ENCODE measurements at regions of chr2 and their contacts with region 1.

Region 1: DNA sequence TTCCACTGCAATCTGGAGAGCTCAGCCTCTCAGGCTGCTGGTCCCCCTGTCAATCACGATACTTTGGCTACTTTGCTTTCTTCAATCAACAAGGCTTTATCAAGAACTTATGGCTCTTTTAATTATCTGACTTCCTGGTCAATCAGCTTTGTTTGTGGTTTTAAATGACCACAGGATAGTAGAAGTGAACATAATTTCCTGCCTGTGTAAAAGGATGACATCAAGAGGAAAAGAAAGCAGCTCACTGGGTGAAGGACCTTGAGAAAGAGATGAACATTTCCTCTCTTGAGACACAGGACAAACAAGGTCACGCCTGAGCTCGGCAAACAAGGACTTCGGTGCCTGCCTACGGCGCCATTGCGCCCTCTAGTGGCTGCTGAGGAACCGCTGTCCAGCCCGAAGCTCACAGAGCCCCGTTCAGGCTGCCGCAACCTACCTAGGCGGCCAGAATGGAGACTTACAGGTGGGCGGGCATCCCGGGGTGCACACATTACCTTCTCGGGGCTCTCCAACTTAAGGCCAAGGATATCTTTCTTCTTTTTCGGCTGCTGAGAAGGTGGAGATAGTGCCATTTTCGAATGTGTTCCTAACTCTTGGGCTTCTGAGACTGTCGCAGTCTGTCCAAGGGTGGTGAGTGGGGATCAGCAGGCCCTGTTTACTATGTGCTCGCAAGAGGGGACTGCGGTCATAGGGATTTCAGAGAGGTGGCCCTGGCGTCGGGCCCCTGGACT is 54.0 kb downstream of the IL1RL2 start:
- DNase-seq: peak; percentile 77 to 83 (median 77)
- H3K4me3 ChIP-seq: no peak overlapping the region
- H3K4me3 Mint-ChIP-seq: peak overlapping the region in 4 of 8 donors; percentile 10 to 57 (median 38)
- H3K27ac ChIP-seq: no peak overlapping the region
- H3K27ac Mint-ChIP-seq: peak overlapping the region in 6 of 7 donors; percentile 3 to 78 (median 62)
- H3K4me1 ChIP-seq: peaks cover 12% of the 10 kb centered on the region
- H3K4me1 Mint-ChIP-seq: peaks cover 6 to 19% (median 11%) of the 10 kb centered on the region in 4 donors
- H3K27me3 ChIP-seq: no peaks in the 10 kb centered on the region
- H3K27me3 Mint-ChIP-seq: no peaks in the 10 kb centered on the region

Region 2: DNA sequence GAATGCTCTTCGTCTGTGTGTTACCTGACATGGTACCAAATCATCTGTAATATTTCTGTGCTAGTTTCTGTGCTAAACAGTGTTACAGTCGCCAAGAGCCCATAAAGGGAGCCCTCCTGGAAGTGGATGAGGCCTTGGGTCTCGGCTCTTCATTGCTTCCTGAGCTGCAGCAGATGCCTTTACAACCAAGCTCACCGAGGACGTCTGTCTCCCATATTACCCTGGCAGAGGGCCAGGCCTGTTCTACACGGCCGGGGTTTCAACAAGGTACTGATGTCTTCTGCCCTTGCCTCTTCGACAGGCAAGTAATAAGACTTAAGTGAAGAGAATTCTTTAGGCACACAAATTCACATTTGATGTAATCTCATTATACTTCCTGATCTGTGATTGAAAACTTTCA is 1221.9 kb before region 1 on chr2:
- CTCF ChIA-PET with region 1: no interaction called
- POLR2A ChIA-PET with region 1: no interaction called
- intact Hi-C with region 1: no loop called
- DNase-seq: no peak
- H3K4me3 ChIP-seq: no peak overlapping the region
- H3K4me3 Mint-ChIP-seq: no peak overlapping the region
- H3K27ac ChIP-seq: no peak overlapping the region
- H3K27ac Mint-ChIP-seq: peak overlapping the region in 2 of 7 donors; percentile 25 to 48
- H3K4me1 ChIP-seq: no peaks in the 10 kb centered on the region
- H3K4me1 Mint-ChIP-seq: peaks cover 0 to 1% (median 0%) of the 10 kb centered on the region in 4 donors
- H3K27me3 ChIP-seq: no peaks in the 10 kb centered on the region
- H3K27me3 Mint-ChIP-seq: no peaks in the 10 kb centered on the region

Region 3: GRCh38 chr2:101551336-101551888 is 689.4 kb before region 1 on chr2:
- CTCF ChIA-PET with region 1: no interaction called
- POLR2A ChIA-PET with region 1: no interaction called
- intact Hi-C with region 1: no loop called
- DNase-seq: no peak
- H3K4me3 ChIP-seq: no peak overlapping the region
- H3K4me3 Mint-ChIP-seq: peak overlapping the region in 2 of 8 donors; percentile 29 to 39
- H3K27ac ChIP-seq: no peak overlapping the region
- H3K27ac Mint-ChIP-seq: no peak overlapping the region
- H3K4me1 ChIP-seq: peaks cover 10% of the 10 kb centered on the region
- H3K4me1 Mint-ChIP-seq: peaks cover 12 to 19% (median 15%) of the 10 kb centered on the region in 4 donors
- H3K27me3 ChIP-seq: no peaks in the 10 kb centered on the region
- H3K27me3 Mint-ChIP-seq: no peaks in the 10 kb centered on the region

Region 4: DNA sequence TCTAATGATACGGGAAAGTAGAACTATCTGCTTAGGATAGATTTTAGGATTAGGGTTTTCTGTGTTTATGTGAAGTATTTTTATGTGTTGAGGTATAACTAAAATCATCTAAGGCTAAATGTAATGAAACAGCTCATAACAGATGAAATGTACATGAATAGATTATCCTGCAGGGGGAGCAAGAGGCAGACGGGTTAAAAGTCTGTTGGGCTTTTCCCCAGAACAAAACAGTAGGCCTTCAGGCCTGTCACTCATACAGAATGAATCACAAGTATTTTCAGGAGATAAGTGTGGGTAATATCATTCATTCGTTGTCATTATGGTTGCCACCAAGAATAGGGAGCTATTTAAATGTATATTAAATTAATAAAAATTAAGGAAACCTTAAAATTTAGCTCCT is 356.9 kb before region 1 on chr2:
- CTCF ChIA-PET with region 1: interaction called, 22 read pairs
- POLR2A ChIA-PET with region 1: no interaction called
- intact Hi-C with region 1: loop called (anchors 2 kb)
- DNase-seq: peak in 4 of 5 donors; percentile 25 to 37 (median 32)
- H3K4me3 ChIP-seq: no peak overlapping the region
- H3K4me3 Mint-ChIP-seq: no peak overlapping the region
- H3K27ac ChIP-seq: no peak overlapping the region
- H3K27ac Mint-ChIP-seq: peak overlapping the region in 3 of 7 donors; percentile 1 to 34 (median 22)
- H3K4me1 ChIP-seq: no peaks in the 10 kb centered on the region
- H3K4me1 Mint-ChIP-seq: peaks cover 0 to 3% (median 0%) of the 10 kb centered on the region in 4 donors
- H3K27me3 ChIP-seq: no peaks in the 10 kb centered on the region
- H3K27me3 Mint-ChIP-seq: no peaks in the 10 kb centered on the region

Region 5: DNA sequence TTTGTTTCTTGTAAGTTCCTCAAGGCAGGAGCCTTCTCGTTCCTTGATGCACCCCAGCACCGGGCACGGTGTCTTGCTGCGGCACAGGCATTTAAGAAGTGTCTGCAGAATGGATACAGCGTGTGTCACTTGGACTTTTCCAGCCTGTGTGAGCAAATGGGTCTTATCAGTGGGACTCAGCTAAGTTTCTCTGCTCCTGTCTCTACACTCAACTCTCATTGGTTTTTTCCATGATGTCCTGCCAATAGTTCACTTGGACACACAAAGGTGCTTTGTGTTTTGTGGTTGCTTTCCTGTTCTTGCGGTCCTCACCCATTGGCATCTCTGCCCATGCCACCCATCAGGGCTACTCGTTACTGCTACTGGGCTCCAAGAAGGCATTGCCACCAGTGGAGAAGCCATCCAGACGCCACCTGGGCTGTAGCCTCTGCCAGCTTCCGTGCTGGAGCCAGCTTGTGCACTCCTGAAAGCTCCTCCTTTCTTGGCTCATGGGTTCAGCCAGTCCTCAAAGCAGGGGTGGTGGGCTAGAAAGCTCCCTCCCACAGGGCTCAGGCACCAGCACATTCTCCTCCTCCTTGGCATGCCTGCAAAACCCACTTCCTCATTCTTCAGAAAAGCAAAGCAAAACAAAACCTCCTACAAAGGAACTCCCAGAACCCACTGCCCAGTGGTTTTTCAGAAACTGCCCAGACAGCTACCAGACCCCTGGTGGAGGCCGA is 207.6 kb before region 1 on chr2:
- CTCF ChIA-PET with region 1: interaction called, 27 read pairs
- POLR2A ChIA-PET with region 1: interaction called, 3 read pairs
- intact Hi-C with region 1: no loop called
- DNase-seq: peak in 2 of 5 donors; percentile 6 to 7
- H3K4me3 ChIP-seq: no peak overlapping the region
- H3K4me3 Mint-ChIP-seq: peak overlapping the region in 7 of 8 donors; percentile 13 to 84 (median 56)
- H3K27ac ChIP-seq: no peak overlapping the region
- H3K27ac Mint-ChIP-seq: peak overlapping the region; percentile 42 to 86 (median 71)
- H3K4me1 ChIP-seq: peaks cover 25% of the 10 kb centered on the region
- H3K4me1 Mint-ChIP-seq: peaks cover 20 to 33% (median 26%) of the 10 kb centered on the region in 4 donors
- H3K27me3 ChIP-seq: no peaks in the 10 kb centered on the region
- H3K27me3 Mint-ChIP-seq: no peaks in the 10 kb centered on the region

Region 6: GRCh38 chr2:102166189-102166845 is 74.5 kb before region 1 on chr2:
- CTCF ChIA-PET with region 1: interaction called, 28 read pairs
- POLR2A ChIA-PET with region 1: no interaction called
- intact Hi-C with region 1: no loop called
- DNase-seq: no peak
- H3K4me3 ChIP-seq: no peak overlapping the region
- H3K4me3 Mint-ChIP-seq: no peak overlapping the region
- H3K27ac ChIP-seq: no peak overlapping the region
- H3K27ac Mint-ChIP-seq: no peak overlapping the region
- H3K4me1 ChIP-seq: no peaks in the 10 kb centered on the region
- H3K4me1 Mint-ChIP-seq: no peaks in the 10 kb centered on the region
- H3K27me3 ChIP-seq: no peaks in the 10 kb centered on the region
- H3K27me3 Mint-ChIP-seq: no peaks in the 10 kb centered on the region

Region 7: DNA sequence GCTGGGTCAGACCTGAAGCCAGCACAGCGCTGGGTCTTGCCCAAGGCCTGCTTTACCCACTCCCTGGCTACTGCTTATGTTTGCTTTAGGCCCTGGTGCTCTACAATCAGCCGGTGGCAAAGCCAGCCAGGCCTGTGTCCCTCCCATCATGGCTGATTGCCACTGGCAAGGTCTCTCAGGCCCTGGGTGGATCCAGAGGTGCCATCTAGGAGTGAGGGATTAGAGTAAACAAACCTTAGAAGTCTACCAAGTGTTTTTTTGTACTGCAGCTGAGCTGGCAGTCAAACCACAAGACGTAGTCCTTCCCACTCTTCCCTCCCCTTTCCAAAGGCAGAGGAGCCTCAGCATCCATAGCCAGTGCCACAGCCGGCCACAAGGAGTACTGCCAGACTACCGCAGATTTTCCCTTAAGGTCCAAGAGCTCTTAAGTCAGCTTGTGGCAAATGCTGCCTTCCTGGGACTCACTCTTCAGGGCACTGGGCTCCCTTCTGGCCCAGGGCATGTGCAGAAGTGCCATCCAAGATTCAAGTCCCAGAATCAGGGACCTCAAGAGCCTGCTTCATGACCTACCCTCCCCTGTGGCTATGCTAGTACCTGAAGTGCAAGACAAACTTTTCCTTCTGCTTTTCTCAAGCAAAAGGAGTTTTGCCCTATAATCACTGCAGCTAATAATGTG is 34.0 kb before region 1 on chr2:
- CTCF ChIA-PET with region 1: interaction called, 10 read pairs
- POLR2A ChIA-PET with region 1: no interaction called
- intact Hi-C with region 1: no loop called
- DNase-seq: no peak
- H3K4me3 ChIP-seq: no peak overlapping the region
- H3K4me3 Mint-ChIP-seq: no peak overlapping the region
- H3K27ac ChIP-seq: no peak overlapping the region
- H3K27ac Mint-ChIP-seq: no peak overlapping the region
- H3K4me1 ChIP-seq: no peaks in the 10 kb centered on the region
- H3K4me1 Mint-ChIP-seq: no peaks in the 10 kb centered on the region
- H3K27me3 ChIP-seq: no peaks in the 10 kb centered on the region
- H3K27me3 Mint-ChIP-seq: no peaks in the 10 kb centered on the region

Region 8: DNA sequence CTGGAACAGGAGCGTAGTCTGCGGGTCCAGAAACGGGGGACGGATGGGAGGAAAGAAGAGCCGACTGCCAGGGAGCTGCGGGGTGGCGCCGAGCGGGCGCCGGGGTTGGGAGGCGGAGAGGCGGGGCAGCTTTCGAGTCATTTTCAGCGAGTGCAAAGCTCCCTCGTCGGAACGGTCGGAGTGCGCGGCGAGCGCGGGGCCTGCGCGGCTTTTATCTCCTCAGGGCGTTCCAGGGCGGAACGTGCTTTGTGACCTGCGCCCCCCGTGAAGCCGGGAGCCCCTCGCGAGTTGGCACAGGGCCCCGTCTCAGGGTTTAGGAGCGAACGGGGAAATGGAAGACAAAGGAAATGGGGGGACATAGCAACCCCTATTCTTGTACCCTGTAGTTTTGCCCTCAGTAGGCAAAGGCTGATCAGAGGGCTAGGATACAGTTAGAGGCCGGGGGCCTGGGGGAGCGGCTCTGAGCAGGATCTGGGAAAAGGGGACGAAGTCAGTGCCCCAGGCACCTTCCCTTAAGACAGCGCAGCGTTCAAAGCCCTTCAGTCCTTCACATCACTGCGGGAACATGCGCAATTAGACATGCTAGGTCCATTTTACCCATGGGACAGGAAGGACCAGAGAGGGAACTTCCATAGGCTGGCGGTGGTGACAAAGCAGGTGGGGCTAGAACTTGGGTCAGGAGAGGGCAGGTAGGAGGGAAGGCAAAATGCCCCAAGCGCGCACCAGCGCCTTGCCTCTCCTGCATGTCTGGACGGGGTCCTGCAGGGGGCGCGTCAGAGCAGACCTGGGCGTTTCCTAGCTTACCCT is 10.4 kb after region 1 on chr2:
- CTCF ChIA-PET with region 1: interaction called, 100 read pairs
- POLR2A ChIA-PET with region 1: no interaction called
- intact Hi-C with region 1: no loop called
- DNase-seq: peak; percentile 50 to 58 (median 54)
- H3K4me3 ChIP-seq: peak overlapping the region; percentile 80 to 86
- H3K4me3 Mint-ChIP-seq: peak overlapping the region; percentile 90 to 99 (median 95)
- H3K27ac ChIP-seq: no peak overlapping the region
- H3K27ac Mint-ChIP-seq: peak overlapping the region; percentile 18 to 94 (median 78)
- H3K4me1 ChIP-seq: peaks cover 12% of the 10 kb centered on the region
- H3K4me1 Mint-ChIP-seq: peaks cover 14 to 39% (median 23%) of the 10 kb centered on the region in 4 donors
- H3K27me3 ChIP-seq: no peaks in the 10 kb centered on the region
- H3K27me3 Mint-ChIP-seq: peaks cover 0 to 2% of the 10 kb centered on the region in 2 donors

Region 9: GRCh38 chr2:102442967-102443828 is 202.4 kb after region 1 on chr2:
- CTCF ChIA-PET with region 1: interaction called, 54 read pairs
- POLR2A ChIA-PET with region 1: interaction called, 3 read pairs
- intact Hi-C with region 1: no loop called
- DNase-seq: peak; percentile 43 to 59 (median 56)
- H3K4me3 ChIP-seq: no peak overlapping the region
- H3K4me3 Mint-ChIP-seq: peak overlapping the region in 5 of 8 donors; percentile 19 to 75 (median 66)
- H3K27ac ChIP-seq: no peak overlapping the region
- H3K27ac Mint-ChIP-seq: peak overlapping the region in 5 of 7 donors; percentile 43 to 92 (median 53)
- H3K4me1 ChIP-seq: peaks cover 5% of the 10 kb centered on the region
- H3K4me1 Mint-ChIP-seq: peaks cover 8 to 11% (median 8%) of the 10 kb centered on the region in 4 donors
- H3K27me3 ChIP-seq: no peaks in the 10 kb centered on the region
- H3K27me3 Mint-ChIP-seq: no peaks in the 10 kb centered on the region

Measured in CD4-positive, alpha-beta memory T cell (primary cell).